ENCODE measurements at regions of chr16 and their contacts with region 1.

Region 1: DNA sequence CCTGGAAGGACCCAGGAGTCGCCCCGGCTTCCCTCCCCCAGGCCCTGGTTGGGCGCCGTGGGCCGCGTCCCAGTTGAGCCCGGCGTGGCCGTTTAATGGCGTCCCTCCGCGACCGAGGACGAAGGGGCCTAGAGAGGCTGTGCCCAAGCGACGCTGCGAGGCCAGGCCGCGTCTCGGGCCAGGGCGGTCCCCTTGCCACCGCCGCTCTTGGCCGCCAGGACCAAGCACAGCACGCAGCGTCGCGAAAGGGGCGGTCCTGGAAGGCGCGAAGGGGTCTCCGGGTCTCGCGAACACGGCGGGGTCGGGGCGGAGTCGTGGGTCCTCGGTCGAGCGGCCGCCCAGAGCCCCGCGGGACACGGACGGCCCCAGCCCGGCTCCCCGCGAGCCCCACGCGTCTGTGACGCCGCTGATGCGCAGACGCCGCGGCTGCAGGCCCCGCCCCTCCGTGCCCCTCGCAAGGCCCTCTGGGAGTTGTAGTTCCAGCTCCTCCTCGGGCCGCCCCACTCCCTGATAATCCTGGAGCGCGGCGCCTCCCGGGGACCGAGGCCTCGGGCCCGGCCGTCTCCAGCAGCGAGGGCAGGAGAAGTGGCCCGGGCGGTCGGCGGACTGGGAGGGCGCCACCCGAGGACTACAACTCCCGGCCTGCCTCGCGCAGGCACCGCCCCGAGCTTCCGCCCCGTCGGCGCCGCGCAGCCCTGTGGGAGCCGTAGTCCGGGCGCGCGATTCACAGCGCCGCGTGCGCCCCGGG is at the start of gene CAPN15:
- DNase-seq: peak; percentile 71 to 94 (median 81)
- ATAC-seq: peak; percentile 87
- H3K4me3 ChIP-seq: peak within 1 kb of the TSS; percentile 83
- H3K4me3 Mint-ChIP-seq: peak within 1 kb of the TSS; percentile 90
- H3K27ac ChIP-seq: peak within 1 kb of the TSS; percentile 73 to 84
- H3K27ac Mint-ChIP-seq: peak within 1 kb of the TSS; percentile 80
- H3K4me1 ChIP-seq: peaks cover 50% of the 10 kb centered on the region
- H3K4me1 Mint-ChIP-seq: peaks cover 25% of the 10 kb centered on the region
- H3K27me3 ChIP-seq: no peaks in the 10 kb centered on the region
- H3K27me3 Mint-ChIP-seq: no peaks in the 10 kb centered on the region
- CTCF ChIP-seq: no peak
- total RNA-seq, gene CAPN15: 35.5 to 36.9 TPM

Region 2: DNA sequence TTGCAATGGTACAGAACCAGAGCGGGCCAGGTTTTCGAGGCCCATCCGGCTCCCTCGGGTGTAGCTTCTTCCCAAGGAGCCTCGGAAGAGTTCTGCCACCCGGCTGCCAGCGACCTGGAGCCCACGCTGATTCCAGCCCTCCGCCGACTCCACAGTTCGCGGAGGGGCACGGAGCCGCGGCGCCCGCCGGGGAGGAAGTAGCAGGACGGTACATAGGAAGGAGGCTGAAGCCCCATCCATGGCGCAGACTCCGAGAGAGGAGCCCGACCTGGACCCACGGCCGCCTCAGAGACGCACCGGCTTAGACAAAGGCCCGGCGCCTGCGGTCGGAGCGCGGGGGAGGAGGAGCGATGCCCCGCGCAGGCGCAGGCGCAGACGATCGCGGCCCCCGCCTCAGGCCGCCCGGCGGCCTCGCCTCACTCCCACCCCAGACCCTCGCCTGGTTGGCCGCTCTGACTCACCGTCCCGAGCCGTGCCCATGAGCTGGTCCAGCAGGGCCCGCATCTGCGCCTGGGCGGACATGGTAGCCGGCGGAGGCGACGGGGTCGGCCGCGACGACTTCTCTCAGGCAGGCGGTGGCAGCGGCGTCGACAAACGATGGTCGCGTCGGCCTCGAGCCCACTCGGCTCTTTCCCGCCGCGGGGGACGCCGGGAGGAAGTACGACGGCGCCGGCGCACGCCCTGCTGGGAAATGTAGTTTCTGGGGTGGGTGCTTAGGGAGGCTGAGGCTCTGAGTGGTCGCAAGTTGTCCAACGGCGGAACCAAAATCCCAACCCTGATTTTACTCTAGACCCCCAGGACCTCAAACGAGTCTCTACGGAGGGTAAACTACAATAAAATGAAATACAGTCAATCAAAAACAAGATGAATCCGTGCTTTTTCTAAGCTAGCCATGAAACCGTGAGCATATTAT is 298.1 kb before region 1 on chr16 and contains the start of gene LUC7L:
- CTCF ChIA-PET with region 1: no interaction called
- POLR2A ChIA-PET with region 1: no interaction called
- intact Hi-C with region 1: loop called in 1 of 2 experiments (anchors 5 kb)
- DNase-seq: peak; percentile 75 to 92 (median 80)
- ATAC-seq: peak; percentile 86
- H3K4me3 ChIP-seq: peak within 1 kb of the TSS; percentile 96
- H3K4me3 Mint-ChIP-seq: peak within 1 kb of the TSS; percentile 90
- H3K27ac ChIP-seq: peak within 1 kb of the TSS; percentile 86 to 91
- H3K27ac Mint-ChIP-seq: peak within 1 kb of the TSS; percentile 86
- H3K4me1 ChIP-seq: peaks cover 24% of the 10 kb centered on the region
- H3K4me1 Mint-ChIP-seq: peaks cover 39% of the 10 kb centered on the region
- H3K27me3 ChIP-seq: no peaks in the 10 kb centered on the region
- H3K27me3 Mint-ChIP-seq: no peaks in the 10 kb centered on the region
- CTCF ChIP-seq: no peak
- total RNA-seq, gene LUC7L: 94.8 to 98.4 TPM

Region 3: DNA sequence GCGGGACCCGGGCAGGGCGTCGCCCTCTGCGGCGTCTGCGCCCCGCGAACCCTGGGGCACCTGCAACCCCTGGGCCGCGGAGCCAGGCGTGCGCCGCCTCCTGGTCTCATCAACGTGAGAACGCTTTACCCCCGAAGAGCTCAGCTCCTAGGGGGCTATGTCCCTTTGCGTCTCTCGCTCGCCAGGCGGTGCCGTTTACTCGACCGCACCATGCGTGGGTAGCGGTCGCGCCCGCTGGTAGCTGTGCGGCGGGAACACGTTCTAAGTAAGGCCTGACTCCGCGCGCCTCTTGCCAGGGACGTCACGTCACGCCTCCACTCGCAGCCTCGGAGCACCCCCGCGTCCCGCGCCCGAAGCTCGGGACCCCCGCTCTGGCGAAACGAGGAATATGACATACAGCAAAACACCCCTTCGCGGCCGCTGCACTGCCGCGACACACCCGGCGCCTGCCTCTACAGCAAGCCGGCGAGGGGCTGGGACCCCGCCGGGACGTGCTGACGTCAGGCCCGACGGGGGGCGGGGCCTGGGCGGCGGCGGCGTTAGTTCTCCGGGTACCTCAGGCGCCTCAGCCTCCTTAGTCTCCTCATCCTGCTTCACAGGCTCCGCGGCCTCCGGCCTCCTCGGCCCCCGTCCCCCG is 102.0 kb before region 1 on chr16 and contains the start of gene RAB11FIP3:
- CTCF ChIA-PET with region 1: no interaction called
- POLR2A ChIA-PET with region 1: interaction called, 3 read pairs
- intact Hi-C with region 1: loop called in 1 of 2 experiments (anchors 5 kb)
- DNase-seq: peak; percentile 65 to 91 (median 84)
- ATAC-seq: peak; percentile 89
- H3K4me3 ChIP-seq: peak within 1 kb of the TSS; percentile 72
- H3K4me3 Mint-ChIP-seq: peak within 1 kb of the TSS; percentile 95
- H3K27ac ChIP-seq: peak within 1 kb of the TSS; percentile 70 to 84
- H3K27ac Mint-ChIP-seq: peak within 1 kb of the TSS; percentile 93
- H3K4me1 ChIP-seq: peaks cover 34% of the 10 kb centered on the region
- H3K4me1 Mint-ChIP-seq: peaks cover 38% of the 10 kb centered on the region
- H3K27me3 ChIP-seq: no peaks in the 10 kb centered on the region
- H3K27me3 Mint-ChIP-seq: no peaks in the 10 kb centered on the region
- CTCF ChIP-seq: peak; percentile 21
- total RNA-seq, gene RAB11FIP3: 28.4 to 29.0 TPM

Region 4: GRCh38 chr16:546909-547770 is 20.0 kb after region 1 on chr16:
- CTCF ChIA-PET with region 1: no interaction called
- POLR2A ChIA-PET with region 1: no interaction called
- intact Hi-C with region 1: no loop called
- DNase-seq: peak in 12 of 14 experiments; percentile 21 to 78 (median 52)
- ATAC-seq: peak; percentile 76
- H3K4me3 ChIP-seq: no peak overlapping the region
- H3K4me3 Mint-ChIP-seq: no peak overlapping the region
- H3K27ac ChIP-seq: no peak overlapping the region
- H3K27ac Mint-ChIP-seq: no peak overlapping the region
- H3K4me1 ChIP-seq: peaks cover 17% of the 10 kb centered on the region
- H3K4me1 Mint-ChIP-seq: no peaks in the 10 kb centered on the region
- H3K27me3 ChIP-seq: no peaks in the 10 kb centered on the region
- H3K27me3 Mint-ChIP-seq: no peaks in the 10 kb centered on the region
- CTCF ChIP-seq: no peak

Region 5: GRCh38 chr16:589658-590159 is 62.5 kb after region 1 on chr16 and contains the start of gene RAB40C:
- CTCF ChIA-PET with region 1: no interaction called
- POLR2A ChIA-PET with region 1: interaction called, 11 read pairs
- intact Hi-C with region 1: loop called in 1 of 2 experiments (anchors 1 kb)
- DNase-seq: peak; percentile 98 to 100 (median 99)
- ATAC-seq: peak; percentile 80
- H3K4me3 ChIP-seq: peak within 1 kb of the TSS; percentile 80
- H3K4me3 Mint-ChIP-seq: peak within 1 kb of the TSS; percentile 98
- H3K27ac ChIP-seq: peak within 1 kb of the TSS; percentile 84 to 88
- H3K27ac Mint-ChIP-seq: peak within 1 kb of the TSS; percentile 95
- H3K4me1 ChIP-seq: peaks cover 42% of the 10 kb centered on the region
- H3K4me1 Mint-ChIP-seq: peaks cover 16% of the 10 kb centered on the region
- H3K27me3 ChIP-seq: no peaks in the 10 kb centered on the region
- H3K27me3 Mint-ChIP-seq: no peaks in the 10 kb centered on the region
- CTCF ChIP-seq: no peak
- total RNA-seq, gene RAB40C: 8.9 to 9.5 TPM

Region 6: GRCh38 chr16:636206-637080 is 109.3 kb after region 1 on chr16 and contains the start of gene METTL26:
- CTCF ChIA-PET with region 1: interaction called, 3 read pairs
- POLR2A ChIA-PET with region 1: interaction called, 10 read pairs
- intact Hi-C with region 1: loop called in 1 of 2 experiments (anchors 1 kb)
- DNase-seq: peak; percentile 88 to 97 (median 92)
- ATAC-seq: peak; percentile 85
- H3K4me3 ChIP-seq: peak within 1 kb of the TSS; percentile 73
- H3K4me3 Mint-ChIP-seq: peak within 1 kb of the TSS; percentile 99
- H3K27ac ChIP-seq: peak within 1 kb of the TSS; percentile 82 to 86
- H3K27ac Mint-ChIP-seq: peak within 1 kb of the TSS; percentile 100
- H3K4me1 ChIP-seq: peaks cover 38% of the 10 kb centered on the region
- H3K4me1 Mint-ChIP-seq: peaks cover 8% of the 10 kb centered on the region
- H3K27me3 ChIP-seq: no peaks in the 10 kb centered on the region
- H3K27me3 Mint-ChIP-seq: peaks cover 6% of the 10 kb centered on the region
- CTCF ChIP-seq: no peak
- total RNA-seq, gene METTL26: 39.5 to 39.6 TPM

Region 7: DNA sequence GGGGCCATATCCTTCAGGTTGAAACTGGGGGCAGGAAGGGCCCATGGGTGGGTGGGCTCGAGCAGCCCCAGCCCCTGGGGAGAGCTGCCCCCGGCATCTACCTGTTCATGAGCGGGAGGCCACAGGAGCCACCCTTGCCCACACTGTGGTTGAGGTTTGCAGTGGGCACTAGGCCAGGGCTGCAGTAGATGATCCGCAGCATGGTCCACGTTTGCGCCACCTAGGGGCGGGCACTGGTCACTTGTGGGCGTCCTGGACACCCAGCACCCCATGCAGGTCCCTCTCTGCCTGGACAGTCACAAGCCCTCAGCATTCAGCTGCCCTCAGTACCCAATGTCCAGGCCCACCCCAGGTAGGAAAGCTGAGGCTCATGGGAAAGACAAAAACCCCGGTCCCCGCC is 158.8 kb after region 1 on chr16:
- CTCF ChIA-PET with region 1: no interaction called
- POLR2A ChIA-PET with region 1: no interaction called
- intact Hi-C with region 1: no loop called
- DNase-seq: peak in 1 of 14 experiments; percentile 52
- ATAC-seq: no peak
- H3K4me3 ChIP-seq: no peak overlapping the region
- H3K4me3 Mint-ChIP-seq: peak overlapping the region; percentile 38
- H3K27ac ChIP-seq: no peak overlapping the region
- H3K27ac Mint-ChIP-seq: no peak overlapping the region
- H3K4me1 ChIP-seq: peaks cover 73% of the 10 kb centered on the region
- H3K4me1 Mint-ChIP-seq: peaks cover 16% of the 10 kb centered on the region
- H3K27me3 ChIP-seq: no peaks in the 10 kb centered on the region
- H3K27me3 Mint-ChIP-seq: no peaks in the 10 kb centered on the region
- CTCF ChIP-seq: no peak

Region 8: DNA sequence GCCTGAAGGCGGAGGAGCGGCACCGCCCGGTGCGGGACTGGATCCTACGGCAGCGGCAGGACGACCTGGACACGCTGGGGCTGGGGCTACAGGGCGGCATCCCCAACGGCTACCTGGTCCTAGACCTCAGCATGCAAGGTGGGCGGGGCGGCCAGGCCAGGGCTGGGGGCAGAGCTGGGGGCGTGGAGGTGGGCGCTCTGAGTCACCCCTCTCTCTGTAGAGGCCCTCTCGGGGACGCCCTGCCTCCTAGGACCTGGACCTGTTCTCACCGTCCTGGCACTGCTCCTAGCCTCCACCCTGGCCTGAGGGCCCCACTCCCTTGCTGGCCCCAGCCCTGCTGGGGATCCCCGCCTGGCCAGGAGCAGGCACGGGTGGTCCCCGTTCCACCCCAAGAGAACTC is 241.2 kb after region 1 on chr16:
- CTCF ChIA-PET with region 1: no interaction called
- POLR2A ChIA-PET with region 1: no interaction called
- intact Hi-C with region 1: no loop called
- DNase-seq: peak in 1 of 14 experiments; percentile 19
- ATAC-seq: no peak
- H3K4me3 ChIP-seq: no peak overlapping the region
- H3K4me3 Mint-ChIP-seq: no peak overlapping the region
- H3K27ac ChIP-seq: no peak overlapping the region
- H3K27ac Mint-ChIP-seq: no peak overlapping the region
- H3K4me1 ChIP-seq: no peaks in the 10 kb centered on the region
- H3K4me1 Mint-ChIP-seq: no peaks in the 10 kb centered on the region
- H3K27me3 ChIP-seq: peaks cover 0 to 2% of the 10 kb centered on the region in 2 experiments
- H3K27me3 Mint-ChIP-seq: no peaks in the 10 kb centered on the region
- CTCF ChIP-seq: no peak

Measured in CD4-positive, alpha-beta T cell (primary cell).